CD8-positive, alpha-beta memory T cell (primary cell): ENCODE measurements at regions of chr12 and their contacts with region 1.

Region 1: DNA sequence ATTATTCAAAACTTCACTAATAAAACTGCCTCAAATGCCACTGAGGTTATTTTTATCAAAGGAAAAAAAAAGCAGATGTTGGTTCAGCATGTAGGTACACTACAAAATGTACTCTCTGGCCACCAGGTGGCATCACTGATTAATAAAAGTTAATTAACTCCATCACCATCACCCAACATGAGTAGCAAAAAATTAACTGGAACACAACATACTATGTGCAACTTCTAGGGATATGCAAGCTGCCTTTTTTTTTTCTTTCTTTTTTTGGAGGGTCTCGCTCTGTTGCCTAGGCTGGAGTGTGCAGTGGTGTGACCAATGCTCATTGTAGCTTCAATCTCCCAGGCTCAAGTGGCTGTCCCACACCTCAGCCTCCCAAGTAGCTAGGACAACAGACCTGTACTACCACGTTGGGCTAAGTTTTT is 43.8 kb upstream of the NR2C1 start:
- DNase-seq: peak; percentile 39 to 68 (median 51)
- H3K4me3 ChIP-seq: no peak overlapping the region
- H3K4me3 Mint-ChIP-seq: no peak overlapping the region
- H3K27ac ChIP-seq: no peak overlapping the region
- H3K27ac Mint-ChIP-seq: no peak overlapping the region
- H3K4me1 ChIP-seq: no peaks in the 10 kb centered on the region
- H3K4me1 Mint-ChIP-seq: no peaks in the 10 kb centered on the region
- H3K27me3 ChIP-seq: no peaks in the 10 kb centered on the region
- H3K27me3 Mint-ChIP-seq: no peaks in the 10 kb centered on the region

Region 2: DNA sequence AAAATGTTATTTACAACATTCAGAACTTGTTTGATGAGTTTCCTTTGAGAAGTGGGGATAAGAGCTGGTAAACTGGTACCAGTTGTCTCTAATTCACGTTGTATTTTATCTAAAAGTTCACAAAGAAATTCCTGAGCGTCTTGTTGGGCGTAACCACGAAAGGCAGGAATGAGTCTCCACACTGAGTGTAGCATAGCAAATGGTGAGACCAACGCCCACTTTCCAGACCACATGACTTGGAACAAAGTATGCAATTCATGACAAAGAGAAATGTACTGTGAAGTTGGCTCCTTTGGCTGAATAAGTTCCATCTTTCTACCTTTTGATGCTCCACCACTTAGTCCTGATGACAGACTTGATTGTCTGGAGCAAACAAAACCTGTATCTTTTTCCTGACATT is 415.7 kb after region 1 on chr12:
- CTCF ChIA-PET with region 1: interaction called, 63 read pairs
- POLR2A ChIA-PET with region 1: no interaction called
- DNase-seq: no peak
- H3K4me3 ChIP-seq: no peak overlapping the region
- H3K4me3 Mint-ChIP-seq: no peak overlapping the region
- H3K27ac ChIP-seq: no peak overlapping the region
- H3K27ac Mint-ChIP-seq: peak overlapping the region in 1 of 8 donors; percentile 10
- H3K4me1 ChIP-seq: no peaks in the 10 kb centered on the region
- H3K4me1 Mint-ChIP-seq: peaks cover 0 to 7% (median 0%) of the 10 kb centered on the region in 3 donors
- H3K27me3 ChIP-seq: no peaks in the 10 kb centered on the region
- H3K27me3 Mint-ChIP-seq: peaks cover 3% of the 10 kb centered on the region in 2 donors

Region 3: GRCh38 chr12:95538656-95539055 is 421.5 kb after region 1 on chr12:
- CTCF ChIA-PET with region 1: interaction called, 63 read pairs
- POLR2A ChIA-PET with region 1: no interaction called
- DNase-seq: no peak
- H3K4me3 ChIP-seq: no peak overlapping the region
- H3K4me3 Mint-ChIP-seq: no peak overlapping the region
- H3K27ac ChIP-seq: no peak overlapping the region
- H3K27ac Mint-ChIP-seq: no peak overlapping the region
- H3K4me1 ChIP-seq: no peaks in the 10 kb centered on the region
- H3K4me1 Mint-ChIP-seq: peaks cover 0 to 4% (median 0%) of the 10 kb centered on the region in 3 donors
- H3K27me3 ChIP-seq: no peaks in the 10 kb centered on the region
- H3K27me3 Mint-ChIP-seq: peaks cover 0 to 3% of the 10 kb centered on the region in 2 donors